ENCODE measurements at regions of chr6 and their contacts with region 1.

Region 1: GRCh38 chr6:32838114-32838958 is at the start of gene TAP2:
- DNase-seq: peak; percentile 79 to 96
- H3K4me3 ChIP-seq: peak within 1 kb of the TSS; percentile 68
- H3K27ac ChIP-seq: peak within 1 kb of the TSS; percentile 21; the same call in 1 of the 2 replicates
- H3K4me1 ChIP-seq: peaks cover 13% of the 10 kb centered on the region
- H3K27me3 ChIP-seq: no peaks in the 10 kb centered on the region
- CTCF ChIP-seq: peak; percentile 93
- total RNA-seq, gene TAP2: 70.6 and 91.2 TPM in 2 replicates

Region 2: GRCh38 chr6:32796848-32797776 is 41.2 kb before region 1 on chr6:
- CTCF ChIA-PET with region 1: no interaction called
- POLR2A ChIA-PET with region 1: no interaction called
- intact Hi-C with region 1: loop called (anchors 1 kb)
- DNase-seq: peak; percentile 51 to 64
- H3K4me3 ChIP-seq: peak overlapping the region; percentile 30; the same call in 1 of the 2 replicates
- H3K27ac ChIP-seq: no peak overlapping the region
- H3K4me1 ChIP-seq: no peaks in the 10 kb centered on the region
- H3K27me3 ChIP-seq: peaks cover 35% of the 10 kb centered on the region
- CTCF ChIP-seq: peak; percentile 94

Region 3: GRCh38 chr6:32819729-32820128 is 18.6 kb before region 1 on chr6:
- CTCF ChIA-PET with region 1: interaction called, 6 read pairs
- POLR2A ChIA-PET with region 1: interaction called, 3 read pairs
- intact Hi-C with region 1: loop called (anchors 1 kb)
- DNase-seq: peak; percentile 56 to 85
- H3K4me3 ChIP-seq: no peak overlapping the region
- H3K27ac ChIP-seq: peak overlapping the region; percentile 80
- H3K4me1 ChIP-seq: peaks cover 32% of the 10 kb centered on the region
- H3K27me3 ChIP-seq: no peaks in the 10 kb centered on the region
- CTCF ChIP-seq: no peak

Region 4: DNA sequence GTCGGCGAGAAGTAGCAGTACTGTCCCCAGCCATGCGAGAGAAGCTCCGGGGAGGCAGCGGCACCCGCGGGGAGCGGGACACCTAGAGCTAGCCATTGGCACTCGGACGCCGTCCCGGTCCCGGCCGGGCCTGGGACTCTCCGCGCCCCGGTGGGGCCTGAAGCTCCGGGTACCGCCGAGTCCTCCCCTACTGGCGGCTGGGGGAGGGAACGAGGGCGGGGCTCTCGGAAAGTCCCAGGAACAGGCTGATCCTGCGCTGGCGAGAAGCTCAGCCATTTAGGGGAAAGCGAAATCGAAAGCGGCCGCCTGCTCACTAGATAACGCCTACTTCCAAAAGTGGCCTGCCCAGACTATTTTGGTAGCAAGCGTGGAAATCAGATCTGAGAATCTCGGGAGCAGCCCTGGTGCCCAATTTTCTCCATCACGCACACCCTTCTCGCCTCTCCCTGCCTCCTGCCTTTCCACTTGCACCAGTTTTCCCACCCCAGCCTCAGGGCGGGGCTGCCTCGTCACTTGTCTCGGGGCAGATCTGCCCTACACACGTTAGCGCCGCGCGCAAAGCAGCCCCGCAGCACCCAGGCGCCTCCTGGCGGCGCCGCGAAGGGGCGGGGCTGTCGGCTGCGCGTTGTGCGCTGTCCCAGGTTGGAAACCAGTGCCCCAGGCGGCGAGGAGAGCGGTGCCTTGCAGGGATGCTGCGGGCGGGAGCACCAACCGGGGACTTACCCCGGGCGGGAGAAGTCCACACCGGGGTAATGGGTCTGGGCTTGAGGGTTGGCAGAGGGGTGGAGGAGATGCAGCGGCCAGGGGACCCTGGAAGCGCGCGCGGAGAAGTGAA is 15.4 kb after region 1 on chr6 and contains the starts of genes PSMB9 and TAP1:
- CTCF ChIA-PET with region 1: interaction called, 47 read pairs
- POLR2A ChIA-PET with region 1: interaction called, 3 read pairs
- intact Hi-C with region 1: loop called (anchors 1 kb)
- DNase-seq: peak; percentile 77 to 90
- H3K4me3 ChIP-seq: peak within 1 kb of the TSS; percentile 87
- H3K27ac ChIP-seq: peak within 1 kb of the TSS; percentile 12; the same call in 1 of the 2 replicates
- H3K4me1 ChIP-seq: peaks cover 8% of the 10 kb centered on the region
- H3K27me3 ChIP-seq: no peaks in the 10 kb centered on the region
- CTCF ChIP-seq: peak; percentile 67
- total RNA-seq, gene PSMB9: 37.6 and 48.4 TPM in 2 replicates
- total RNA-seq, gene TAP1: 23.1 and 23.4 TPM in 2 replicates

Region 5: DNA sequence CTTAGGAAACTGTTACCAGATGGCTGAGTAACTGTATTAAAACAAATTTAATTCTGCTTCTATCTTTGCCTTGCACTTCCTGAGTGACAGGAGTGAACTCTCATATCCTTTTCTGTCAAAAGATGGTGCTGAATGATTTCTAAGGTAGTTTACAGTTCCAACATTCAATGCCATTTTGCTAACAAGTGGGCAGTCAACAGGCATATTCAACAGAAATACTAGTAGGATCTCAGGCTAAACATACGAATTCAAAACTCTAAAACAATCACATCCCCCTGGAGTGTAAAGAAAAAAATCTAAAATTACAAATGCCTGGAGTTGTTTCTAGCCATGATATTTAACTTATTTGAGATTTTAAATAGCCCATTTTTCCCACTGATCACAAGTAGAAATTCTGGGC is 22.3 kb after region 1 on chr6:
- CTCF ChIA-PET with region 1: interaction called, 11 read pairs
- POLR2A ChIA-PET with region 1: no interaction called
- intact Hi-C with region 1: no loop called
- DNase-seq: no peak
- H3K4me3 ChIP-seq: no peak overlapping the region
- H3K27ac ChIP-seq: peak overlapping the region; percentile 40; the same call in 1 of the 2 replicates
- H3K4me1 ChIP-seq: peaks cover 20% of the 10 kb centered on the region
- H3K27me3 ChIP-seq: no peaks in the 10 kb centered on the region
- CTCF ChIP-seq: no peak

Region 6: GRCh38 chr6:32943864-32944649 is 105.7 kb after region 1 on chr6:
- CTCF ChIA-PET with region 1: interaction called, 10 read pairs
- POLR2A ChIA-PET with region 1: no interaction called
- intact Hi-C with region 1: no loop called
- DNase-seq: no peak
- H3K4me3 ChIP-seq: no peak overlapping the region
- H3K27ac ChIP-seq: no peak overlapping the region
- H3K4me1 ChIP-seq: no peaks in the 10 kb centered on the region
- H3K27me3 ChIP-seq: peaks cover 19% of the 10 kb centered on the region; the same call in 1 of the 2 replicates
- CTCF ChIP-seq: no peak

Region 7: GRCh38 chr6:32984605-32985389 is 146.5 kb after region 1 on chr6:
- CTCF ChIA-PET with region 1: interaction called, 19 read pairs
- POLR2A ChIA-PET with region 1: interaction called, 3 read pairs
- intact Hi-C with region 1: loop called (anchors 2 kb)
- DNase-seq: peak; percentile 85
- H3K4me3 ChIP-seq: no peak overlapping the region
- H3K27ac ChIP-seq: no peak overlapping the region
- H3K4me1 ChIP-seq: 0 out of 2 replicates have a peak, but pooled peaks cover 4% of the 10 kb centered on the region
- H3K27me3 ChIP-seq: 0 out of 2 replicates have a peak, but pooled peaks cover 18% of the 10 kb centered on the region
- CTCF ChIP-seq: peak; percentile 89

Measured in PC-9 (cell line).